ENCODE measurements at regions of chr17 and their contacts with region 1.

Region 1: DNA sequence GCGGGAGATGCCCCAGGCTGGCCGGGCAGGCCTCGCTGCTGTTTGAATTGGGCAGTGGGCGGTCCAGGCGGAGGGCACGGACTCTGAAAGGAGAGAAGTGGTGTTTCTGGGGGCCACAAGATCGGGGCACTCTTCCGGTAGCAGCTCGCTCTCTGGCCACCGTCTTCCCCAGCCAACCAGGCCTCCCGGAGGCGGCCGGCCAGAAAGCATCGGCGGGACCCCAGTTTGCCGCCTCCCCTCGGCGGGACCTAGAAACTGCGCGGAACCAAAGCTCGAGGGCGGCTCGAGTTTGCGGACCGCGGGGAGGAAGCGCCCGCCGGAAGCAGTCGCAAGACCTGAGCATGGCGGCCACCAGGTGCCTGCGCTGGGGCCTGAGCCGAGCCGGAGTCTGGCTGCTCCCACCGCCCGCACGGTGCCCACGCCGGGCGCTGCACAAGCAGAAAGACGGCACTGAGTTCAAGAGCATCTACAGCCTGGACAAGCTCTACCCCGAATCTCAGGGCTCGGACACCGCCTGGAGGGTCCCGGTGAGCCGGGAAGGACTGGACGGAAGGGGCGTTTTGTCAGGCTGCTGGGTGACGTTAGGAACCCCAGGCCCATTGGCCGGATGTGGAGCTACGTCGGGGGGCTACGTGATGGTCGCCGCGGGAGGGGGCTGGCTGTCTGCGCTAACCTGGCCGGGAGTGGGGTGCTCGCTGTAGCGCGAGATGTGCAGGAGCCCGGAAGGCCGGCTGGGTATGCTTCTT is at the start of gene MRPL58:
- DNase-seq: peak; percentile 93
- H3K4me3 ChIP-seq: peak within 1 kb of the TSS; percentile 76 to 82 (median 78)
- H3K27ac ChIP-seq: peak within 1 kb of the TSS; percentile 93 to 99 (median 96)
- H3K4me1 ChIP-seq: peaks cover 0 to 34% (median 29%) of the 10 kb centered on the region in 4 donors
- H3K27me3 ChIP-seq: no peaks in the 10 kb centered on the region
- CTCF ChIP-seq: peak; percentile 51 to 73 (median 57)
- EP300 ChIP-seq: no peak
- POLR2A ChIP-seq: peak in 1 of 2 donors; percentile 5
- total RNA-seq, gene MRPL58: 46.3 to 104 (median 62.5) TPM

Region 2: DNA sequence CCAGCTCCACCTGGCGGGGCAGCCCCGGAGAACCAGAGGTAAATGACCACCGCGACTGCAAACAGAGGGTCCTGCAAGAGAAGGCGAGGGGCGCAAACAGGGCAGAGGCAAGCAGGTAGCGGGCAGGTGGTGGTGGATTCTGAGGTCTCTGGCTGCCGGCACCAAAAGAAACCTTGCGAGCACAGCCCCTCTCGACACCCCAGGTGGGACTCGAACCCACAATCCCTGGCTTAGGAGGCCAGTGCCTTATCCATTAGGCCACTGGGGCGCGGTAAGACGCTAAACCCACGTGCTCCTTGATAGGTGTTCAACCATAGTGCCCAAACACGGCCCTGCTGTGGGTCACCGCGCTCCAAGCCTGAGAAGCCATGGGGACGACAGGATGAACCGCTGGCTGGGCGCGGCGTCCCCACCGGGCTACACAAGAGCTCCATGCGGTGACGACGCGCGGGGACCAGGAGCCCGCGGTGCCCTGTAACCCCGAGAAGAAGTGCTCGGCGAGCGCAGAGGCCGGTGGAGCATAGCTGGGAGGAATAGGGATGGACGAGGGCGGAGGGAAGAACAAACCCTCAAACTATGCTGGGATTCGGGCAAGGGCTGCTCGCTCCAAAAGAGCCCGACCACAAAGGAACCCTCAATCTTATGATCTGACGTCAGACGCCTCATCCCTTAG is 21.9 kb after region 1 on chr17:
- intact Hi-C with region 1: loop called (anchors 1 kb)
- DNase-seq: peak; percentile 95
- H3K4me3 ChIP-seq: peak overlapping the region; percentile 52 to 73 (median 63)
- H3K27ac ChIP-seq: peak overlapping the region; percentile 85 to 94 (median 94)
- H3K4me1 ChIP-seq: peaks cover 0 to 45% (median 36%) of the 10 kb centered on the region in 4 donors
- H3K27me3 ChIP-seq: no peaks in the 10 kb centered on the region
- CTCF ChIP-seq: peak in 1 of 4 experiments; percentile 25
- EP300 ChIP-seq: no peak
- POLR2A ChIP-seq: no peak

Measured in sigmoid colon (tissue), 7 donors.